ENCODE measurements at regions of chr1 and their contacts with region 1.

Region 1: GRCh38 chr1:235295902-235296376 is 32.0 kb downstream of the ARID4B start:
- DNase-seq: no peak
- H3K4me3 Mint-ChIP-seq: no peak overlapping the region
- H3K27ac Mint-ChIP-seq: no peak overlapping the region
- H3K4me1 Mint-ChIP-seq: peaks cover 34% of the 10 kb centered on the region
- H3K27me3 Mint-ChIP-seq: no peaks in the 10 kb centered on the region

Region 2: GRCh38 chr1:235206533-235207208 is 89.3 kb before region 1 on chr1:
- intact Hi-C with region 1: loop called (anchors 2 kb)
- DNase-seq: no peak
- H3K4me3 Mint-ChIP-seq: peak overlapping the region; percentile 26
- H3K27ac Mint-ChIP-seq: peak overlapping the region; percentile 92
- H3K4me1 Mint-ChIP-seq: peaks cover 28% of the 10 kb centered on the region
- H3K27me3 Mint-ChIP-seq: no peaks in the 10 kb centered on the region

Region 3: DNA sequence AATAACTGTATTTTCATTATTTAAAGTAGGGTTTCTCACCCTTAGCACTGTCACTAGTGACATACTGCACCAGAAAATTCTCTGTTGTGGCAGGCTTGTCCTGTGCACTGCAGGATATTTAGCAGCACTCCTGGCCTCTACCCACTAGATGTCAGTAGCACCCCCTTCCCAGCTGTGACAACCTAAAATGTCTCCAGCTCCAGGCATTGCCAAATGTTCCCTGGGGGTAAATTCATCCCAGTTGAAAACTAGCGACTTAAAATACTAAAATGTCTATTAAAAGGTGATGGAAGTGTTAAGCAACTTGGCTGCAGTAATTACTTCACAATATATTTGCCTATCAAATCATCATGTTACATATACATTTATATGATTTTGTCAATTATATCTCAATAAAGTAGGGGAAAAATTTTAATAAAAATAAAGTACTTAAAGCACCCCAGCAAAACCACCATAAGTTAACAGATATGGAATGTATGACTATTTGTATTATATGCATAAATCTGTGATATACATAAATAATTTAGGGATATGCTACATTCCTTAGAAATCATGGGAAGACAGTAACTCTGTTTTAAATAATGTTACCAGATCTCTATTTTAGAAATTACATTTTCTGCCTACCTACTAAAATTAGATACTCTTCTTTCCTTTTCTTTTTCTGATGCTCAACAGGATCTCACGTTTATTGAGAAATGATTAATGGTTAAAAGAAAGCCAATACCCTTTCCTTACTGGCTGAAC is 42.5 kb before region 1 on chr1:
- intact Hi-C with region 1: loop called (anchors 2 kb)
- DNase-seq: peak; percentile 41
- H3K4me3 Mint-ChIP-seq: no peak overlapping the region
- H3K27ac Mint-ChIP-seq: no peak overlapping the region
- H3K4me1 Mint-ChIP-seq: peaks cover 20% of the 10 kb centered on the region
- H3K27me3 Mint-ChIP-seq: no peaks in the 10 kb centered on the region

Region 4: DNA sequence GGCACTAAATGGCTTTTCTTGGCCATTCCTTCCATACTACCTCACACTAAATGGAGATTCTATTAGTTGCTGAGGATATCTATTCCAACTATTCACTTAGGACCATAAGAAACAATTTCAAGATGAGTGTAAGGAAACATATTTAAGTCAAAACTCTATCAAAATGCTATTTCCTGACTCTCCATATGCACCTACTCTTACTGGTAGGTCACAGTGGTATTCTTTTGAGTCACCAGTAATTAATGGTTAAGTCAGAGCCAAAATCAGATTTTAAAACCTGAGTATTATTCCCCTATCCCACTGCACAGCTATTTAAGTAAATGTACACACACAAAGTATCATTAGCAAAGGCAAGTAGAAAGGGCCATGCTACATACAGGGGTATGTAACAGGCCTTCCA is 18.2 kb before region 1 on chr1:
- intact Hi-C with region 1: loop called (anchors 2 kb)
- DNase-seq: no peak
- H3K4me3 Mint-ChIP-seq: no peak overlapping the region
- H3K27ac Mint-ChIP-seq: peak overlapping the region; percentile 40
- H3K4me1 Mint-ChIP-seq: peaks cover 32% of the 10 kb centered on the region
- H3K27me3 Mint-ChIP-seq: no peaks in the 10 kb centered on the region

Region 5: GRCh38 chr1:235317168-235317567 is 21.2 kb after region 1 on chr1:
- intact Hi-C with region 1: loop called (anchors 2 kb)
- DNase-seq: no peak
- H3K4me3 Mint-ChIP-seq: no peak overlapping the region
- H3K27ac Mint-ChIP-seq: peak overlapping the region; percentile 46
- H3K4me1 Mint-ChIP-seq: peaks cover 61% of the 10 kb centered on the region
- H3K27me3 Mint-ChIP-seq: no peaks in the 10 kb centered on the region

Region 6: DNA sequence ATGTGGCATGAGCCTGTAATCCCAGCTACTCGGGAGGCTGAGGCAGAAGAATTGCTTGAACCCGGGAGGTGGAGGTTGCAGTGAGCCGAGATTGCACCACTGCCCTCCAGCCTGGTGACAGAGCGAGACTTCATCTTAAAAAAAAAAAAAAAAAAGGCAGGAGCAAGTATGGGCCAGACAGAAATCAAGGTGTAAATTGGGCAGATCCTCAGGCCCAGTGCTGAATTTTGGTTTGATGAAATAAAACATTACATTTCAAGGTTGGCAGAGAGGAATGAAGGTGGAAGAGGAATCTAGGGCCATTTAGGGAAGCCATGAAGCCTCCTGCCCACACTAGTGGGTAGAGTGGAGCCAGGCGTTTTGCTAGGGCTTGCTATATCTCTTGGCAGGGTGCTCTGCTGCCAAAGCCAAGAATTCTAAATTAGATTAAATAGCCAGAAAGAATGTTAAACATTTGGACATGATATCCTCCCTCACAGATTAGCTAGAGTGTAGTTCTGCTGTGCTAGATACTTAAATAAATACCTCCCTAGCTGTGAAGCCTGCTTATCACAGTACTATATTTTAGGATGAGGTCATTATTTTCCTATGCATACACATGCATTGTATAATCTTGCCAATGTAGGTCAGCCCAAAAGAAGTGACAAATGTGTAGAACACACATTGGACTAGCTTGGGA is 1211.2 kb after region 1 on chr1:
- intact Hi-C with region 1: no loop called
- DNase-seq: no peak
- H3K4me3 Mint-ChIP-seq: no peak overlapping the region
- H3K27ac Mint-ChIP-seq: no peak overlapping the region
- H3K4me1 Mint-ChIP-seq: peaks cover 26% of the 10 kb centered on the region
- H3K27me3 Mint-ChIP-seq: peaks cover 38% of the 10 kb centered on the region